Activated CD4-positive, alpha-beta T cell treated with anti-CD3 and anti-CD28 coated beads, Interleukin-2, amount 10 ng/mL, durations not matched to agents 24 days and 14 days (primary cell): ENCODE measurements at regions of chr6 and their contacts with region 1.

Region 1: DNA sequence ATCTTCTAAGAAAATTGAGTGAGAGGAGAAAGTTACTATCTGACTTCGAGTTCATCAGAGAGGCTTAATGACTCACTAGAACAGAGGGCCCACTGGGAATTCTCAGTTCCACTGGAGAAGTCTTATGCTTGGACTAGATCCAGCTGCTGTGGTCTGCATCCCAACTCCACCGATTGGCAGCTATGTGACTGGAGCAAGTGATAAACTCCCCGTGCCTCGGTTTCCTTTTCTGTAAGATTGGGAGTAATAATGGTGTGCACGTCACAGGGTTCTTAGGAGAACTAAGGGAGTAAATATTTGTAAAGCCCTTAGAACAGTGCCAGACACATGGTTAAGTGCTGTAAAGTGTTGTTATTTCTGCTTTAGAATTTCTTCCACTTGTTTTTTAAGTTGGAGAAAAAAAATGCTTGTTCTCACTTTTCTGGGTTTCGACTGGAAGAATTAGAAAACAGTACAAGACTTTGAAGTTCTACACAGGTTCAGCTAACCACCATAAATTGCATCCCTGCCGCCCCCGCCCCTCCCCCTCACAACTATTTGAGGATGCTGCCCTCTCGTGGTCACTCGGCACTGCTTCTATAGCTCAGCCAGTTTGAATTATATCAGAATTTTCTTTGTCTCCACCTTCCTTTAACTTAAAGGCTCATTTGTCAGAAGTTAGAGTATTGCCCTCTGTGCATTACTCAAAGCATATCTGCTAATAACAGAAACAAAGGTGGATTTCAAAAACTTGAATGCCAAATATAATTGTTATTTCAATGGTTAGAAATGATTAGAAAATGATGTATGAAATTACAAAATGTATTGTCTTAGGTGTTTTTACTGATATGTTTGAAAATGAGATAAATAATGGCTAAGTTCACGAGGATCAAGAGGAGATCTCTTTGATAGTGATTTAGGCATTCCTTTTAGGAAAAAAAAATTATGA is 95.0 kb upstream of the IFNGR1 start:
- DNase-seq: peak; percentile 84
- H3K4me3 Mint-ChIP-seq: no peak overlapping the region
- H3K27ac Mint-ChIP-seq: no peak overlapping the region
- H3K4me1 Mint-ChIP-seq: peaks cover 7% of the 10 kb centered on the region
- H3K27me3 Mint-ChIP-seq: peaks cover 21% of the 10 kb centered on the region

Region 2: DNA sequence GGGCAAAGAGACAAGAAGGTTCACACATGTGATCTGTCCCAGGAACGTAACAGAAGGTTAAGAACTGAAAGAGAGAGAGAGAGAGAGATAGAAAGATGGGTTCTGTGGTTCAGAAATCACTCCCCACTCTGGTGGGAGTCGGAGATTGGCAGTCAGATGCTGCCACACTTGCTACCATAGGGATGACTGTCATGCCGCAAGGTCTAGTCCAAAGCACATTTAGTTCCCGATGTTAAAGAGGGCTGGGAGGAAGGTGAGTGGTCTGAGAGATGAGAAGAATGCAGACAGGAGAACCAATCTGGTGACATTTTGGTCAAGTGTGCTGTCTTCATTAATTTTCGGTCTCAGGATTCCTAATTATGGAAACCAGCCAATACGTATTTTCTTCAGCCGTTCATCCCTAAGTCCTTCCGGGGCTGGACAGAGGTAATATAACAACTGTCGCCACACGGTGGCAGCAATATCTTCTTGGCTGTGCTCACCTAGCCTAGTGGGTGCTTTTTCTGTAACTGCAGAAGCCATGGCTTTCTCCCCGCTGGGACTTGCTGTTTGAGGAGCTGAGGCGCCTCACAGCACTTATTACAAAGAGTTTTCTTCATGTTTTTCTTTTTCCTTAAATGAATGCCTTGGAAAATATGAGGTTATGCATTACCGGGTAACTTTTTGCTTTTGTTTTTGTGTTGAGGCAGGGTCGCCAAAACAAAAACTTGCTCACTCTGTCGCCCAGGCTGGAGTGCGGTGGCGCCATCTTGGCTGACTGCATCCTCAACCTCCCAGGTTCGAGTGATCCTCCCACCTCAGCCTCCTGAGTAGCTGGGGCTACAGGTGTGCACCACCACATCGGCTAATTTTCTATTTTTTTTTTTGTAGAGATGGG is 346.1 kb before region 1 on chr6:
- intact Hi-C with region 1: loop called (anchors 1 kb)
- DNase-seq: peak; percentile 88
- H3K4me3 Mint-ChIP-seq: no peak overlapping the region
- H3K27ac Mint-ChIP-seq: no peak overlapping the region
- H3K4me1 Mint-ChIP-seq: peaks cover 4% of the 10 kb centered on the region
- H3K27me3 Mint-ChIP-seq: peaks cover 50% of the 10 kb centered on the region

Region 3: DNA sequence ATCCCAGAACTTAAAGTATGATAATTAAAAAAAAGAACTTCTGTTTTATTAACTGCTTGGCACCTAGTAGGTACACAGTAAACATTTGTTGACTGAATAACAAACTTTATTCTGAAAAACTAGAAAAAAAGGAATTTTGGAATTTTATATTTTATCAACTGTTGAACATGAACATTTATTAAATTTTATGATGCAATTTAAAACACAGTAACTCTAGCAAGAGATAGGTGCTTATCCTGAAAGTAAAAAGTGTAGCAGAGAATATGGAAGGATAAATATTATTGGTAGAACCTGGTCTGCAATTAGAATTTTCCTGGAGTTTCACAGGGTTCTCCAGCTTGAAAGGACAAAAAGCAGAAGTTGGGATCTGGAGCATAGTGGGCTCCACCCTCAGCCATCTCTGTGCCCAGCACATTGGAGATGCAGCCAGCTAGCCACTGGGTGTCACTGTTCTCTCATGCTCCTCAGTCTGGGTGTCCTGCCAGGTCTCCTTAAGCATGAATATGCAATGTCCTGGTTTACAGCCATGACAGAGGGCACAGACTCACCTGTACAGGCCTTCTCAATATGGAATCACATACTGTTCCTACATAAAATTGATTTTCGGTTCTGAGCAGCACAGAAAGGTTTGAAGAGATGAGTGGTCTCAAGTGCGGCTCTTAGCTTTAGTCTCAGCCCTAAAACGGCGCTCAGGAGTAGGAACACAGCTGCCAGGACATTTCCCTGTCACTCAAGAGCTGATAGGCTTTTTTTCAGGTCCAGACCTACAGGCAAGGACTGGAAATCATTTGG is 237.7 kb before region 1 on chr6:
- intact Hi-C with region 1: loop called (anchors 1 kb)
- DNase-seq: peak; percentile 87
- H3K4me3 Mint-ChIP-seq: no peak overlapping the region
- H3K27ac Mint-ChIP-seq: no peak overlapping the region
- H3K4me1 Mint-ChIP-seq: no peaks in the 10 kb centered on the region
- H3K27me3 Mint-ChIP-seq: peaks cover 48% of the 10 kb centered on the region

Region 4: DNA sequence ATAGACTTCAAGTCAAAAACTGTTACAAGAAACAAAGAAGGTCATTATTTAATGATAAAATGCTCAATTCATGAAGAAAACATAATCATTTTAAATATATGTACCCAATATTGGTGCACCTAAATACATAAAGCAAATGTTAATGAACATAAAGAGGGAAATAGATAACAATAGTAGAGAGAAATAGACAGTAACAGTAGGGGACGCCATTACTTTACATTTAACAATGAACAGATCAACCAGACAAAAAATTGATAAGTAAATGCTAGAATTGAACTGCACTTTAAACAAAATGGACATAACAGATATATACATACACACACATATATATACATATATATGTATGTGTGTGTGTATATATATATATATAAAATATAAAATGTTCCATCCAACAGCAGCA is 178.1 kb before region 1 on chr6:
- intact Hi-C with region 1: loop called (anchors 5 kb)
- DNase-seq: no peak
- H3K4me3 Mint-ChIP-seq: no peak overlapping the region
- H3K27ac Mint-ChIP-seq: no peak overlapping the region
- H3K4me1 Mint-ChIP-seq: peaks cover 3% of the 10 kb centered on the region
- H3K27me3 Mint-ChIP-seq: peaks cover 41% of the 10 kb centered on the region

Region 5: DNA sequence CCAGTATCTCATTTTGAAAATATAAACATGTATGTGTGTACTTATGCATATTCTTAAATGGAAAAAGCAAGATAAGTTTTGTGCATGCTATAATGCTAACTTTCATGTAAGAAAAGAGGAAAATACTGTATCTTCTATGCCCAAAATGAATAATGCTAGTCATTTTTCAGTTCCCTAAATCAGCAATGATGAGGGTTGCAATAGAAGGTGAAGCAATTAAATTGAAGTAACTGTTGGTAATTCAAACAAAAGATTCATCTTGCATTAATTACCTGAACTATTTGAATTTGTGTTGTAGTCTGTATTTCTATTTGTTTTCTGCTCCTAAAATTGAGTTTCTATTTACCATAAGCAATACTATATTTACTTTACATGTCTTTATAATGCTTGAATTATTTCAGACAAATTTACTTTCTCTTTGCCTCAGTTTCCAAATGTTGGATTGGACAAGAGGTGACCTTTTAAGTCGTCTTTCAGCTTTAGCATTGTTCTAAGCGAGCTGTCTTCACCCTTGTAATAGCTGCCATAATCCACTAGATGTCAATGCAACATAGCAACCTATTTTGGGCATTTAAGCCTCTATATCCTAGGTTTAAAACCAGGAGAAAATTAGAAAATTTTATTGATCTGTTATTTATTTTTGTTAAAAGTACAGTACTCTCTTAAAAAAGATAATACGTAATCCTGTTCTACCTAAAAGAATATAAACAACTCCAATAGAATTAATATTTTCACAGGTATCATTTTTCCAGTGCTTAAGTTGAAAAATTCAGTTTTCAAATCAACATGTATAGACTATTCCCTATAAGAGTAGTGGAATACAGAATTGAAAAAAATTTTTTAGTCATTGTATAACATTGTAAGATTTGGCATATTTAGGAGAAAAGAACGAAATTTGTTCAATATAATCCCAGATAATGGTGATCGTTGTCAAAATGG is 42.7 kb before region 1 on chr6:
- intact Hi-C with region 1: loop called (anchors 1 kb)
- DNase-seq: peak; percentile 64
- H3K4me3 Mint-ChIP-seq: no peak overlapping the region
- H3K27ac Mint-ChIP-seq: no peak overlapping the region
- H3K4me1 Mint-ChIP-seq: peaks cover 2% of the 10 kb centered on the region
- H3K27me3 Mint-ChIP-seq: peaks cover 27% of the 10 kb centered on the region